ENCODE measurements at regions of chr2 and their contacts with region 1.

Region 1: GRCh38 chr2:132267105-132267497 is 105.3 kb upstream of the ANKRD30BL start:
- H3K4me3 Mint-ChIP-seq: no peak overlapping the region
- H3K27ac Mint-ChIP-seq: no peak overlapping the region
- H3K4me1 Mint-ChIP-seq: no peaks in the 10 kb centered on the region
- H3K27me3 Mint-ChIP-seq: peaks cover 2% of the 10 kb centered on the region

Region 2: GRCh38 chr2:133171393-133172004 is 904.4 kb after region 1 on chr2:
- intact Hi-C with region 1: loop called (anchors 5 kb)
- H3K4me3 Mint-ChIP-seq: no peak overlapping the region
- H3K27ac Mint-ChIP-seq: no peak overlapping the region
- H3K4me1 Mint-ChIP-seq: no peaks in the 10 kb centered on the region
- H3K27me3 Mint-ChIP-seq: no peaks in the 10 kb centered on the region